Adrenal gland (tissue), 19 donors: ENCODE measurements at regions of chr15 and their contacts with region 1.

Region 1: DNA sequence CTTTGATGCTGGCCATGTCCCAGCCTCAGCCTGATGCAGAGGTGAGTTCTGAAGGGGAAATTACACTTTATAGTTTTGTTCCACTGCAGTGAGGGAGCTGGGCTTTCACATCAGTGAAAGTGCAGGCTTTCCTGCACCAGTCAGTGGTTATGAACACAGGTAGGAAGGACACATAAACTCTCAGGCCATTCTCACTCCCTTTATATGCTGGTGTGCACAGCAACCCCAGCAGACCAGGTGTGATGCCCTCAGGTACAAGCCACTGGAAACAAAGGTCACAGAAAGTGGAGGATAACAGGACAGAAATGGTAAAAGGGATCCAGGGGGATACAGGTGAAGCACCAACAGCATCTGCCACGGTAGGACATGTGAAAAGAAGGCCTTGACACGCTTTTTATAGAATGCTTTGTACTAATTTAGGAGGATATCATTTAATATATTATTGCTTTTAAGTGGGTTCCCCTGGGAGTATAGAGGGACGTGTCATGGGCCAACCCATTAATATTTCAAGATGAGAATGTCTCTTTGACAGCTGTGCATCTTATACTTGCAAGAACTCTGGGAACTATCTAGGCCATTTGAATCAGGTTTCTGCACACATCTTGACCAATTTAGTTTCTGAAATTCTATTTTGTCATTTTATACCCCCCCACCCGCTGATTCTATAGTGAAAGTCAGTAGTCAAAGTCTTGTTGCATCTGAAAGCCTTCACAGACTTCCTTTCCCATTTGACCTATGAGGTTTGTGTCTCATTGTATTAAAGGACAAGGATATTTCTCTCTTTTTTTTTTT is 25.0 kb upstream of the BLM start:
- DNase-seq: no peak
- H3K4me3 ChIP-seq: no peak overlapping the region
- H3K27ac ChIP-seq: peak overlapping the region in 1 of 5 donors; percentile 6
- H3K4me1 ChIP-seq: peaks cover 9 to 14% of the 10 kb centered on the region in 2 donors
- H3K27me3 ChIP-seq: no peaks in the 10 kb centered on the region
- CTCF ChIP-seq: no peak
- POLR2A ChIP-seq: no peak

Region 2: GRCh38 chr15:90648137-90649070 is 43.8 kb before region 1 on chr15:
- intact Hi-C with region 1: loop called (anchors 2 to 5 kb)
- DNase-seq: peak; percentile 62 to 91 (median 72)
- H3K4me3 ChIP-seq: no peak overlapping the region
- H3K27ac ChIP-seq: peak overlapping the region in 2 of 5 donors; percentile 83 to 84
- H3K4me1 ChIP-seq: peaks cover 0 to 19% of the 10 kb centered on the region in 2 donors
- H3K27me3 ChIP-seq: no peaks in the 10 kb centered on the region
- CTCF ChIP-seq: peak; percentile 86 to 96 (median 92)
- POLR2A ChIP-seq: no peak

Region 3: DNA sequence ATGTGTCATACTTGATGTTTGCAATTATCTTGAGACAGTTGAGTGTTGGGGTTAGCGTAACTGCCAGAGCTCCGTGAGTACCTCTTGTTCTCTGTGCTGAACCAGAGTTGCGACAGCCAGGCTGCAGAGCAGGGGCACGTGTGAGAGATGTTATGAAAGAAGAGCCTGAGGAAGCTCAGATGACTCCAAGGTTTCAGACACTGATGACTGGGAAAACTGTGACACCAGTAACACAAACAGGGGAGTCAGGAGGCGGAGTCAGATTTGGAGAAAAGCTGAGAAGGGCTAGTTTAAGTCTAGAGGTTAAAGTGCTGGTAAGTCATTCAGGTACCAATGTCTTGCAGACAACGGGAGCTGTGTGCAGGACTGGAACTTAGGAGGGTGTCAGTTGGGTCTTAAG is 69.9 kb after region 1 on chr15:
- intact Hi-C with region 1: no loop called
- DNase-seq: peak; percentile 49 to 89 (median 78)
- H3K4me3 ChIP-seq: no peak overlapping the region
- H3K27ac ChIP-seq: peak overlapping the region in 3 of 5 donors; percentile 35 to 76 (median 38)
- H3K4me1 ChIP-seq: peaks cover 0 to 6% of the 10 kb centered on the region in 2 donors
- H3K27me3 ChIP-seq: no peaks in the 10 kb centered on the region
- CTCF ChIP-seq: no peak
- POLR2A ChIP-seq: no peak